ENCODE measurements at regions of chr21 and their contacts with region 1.

Region 1: DNA sequence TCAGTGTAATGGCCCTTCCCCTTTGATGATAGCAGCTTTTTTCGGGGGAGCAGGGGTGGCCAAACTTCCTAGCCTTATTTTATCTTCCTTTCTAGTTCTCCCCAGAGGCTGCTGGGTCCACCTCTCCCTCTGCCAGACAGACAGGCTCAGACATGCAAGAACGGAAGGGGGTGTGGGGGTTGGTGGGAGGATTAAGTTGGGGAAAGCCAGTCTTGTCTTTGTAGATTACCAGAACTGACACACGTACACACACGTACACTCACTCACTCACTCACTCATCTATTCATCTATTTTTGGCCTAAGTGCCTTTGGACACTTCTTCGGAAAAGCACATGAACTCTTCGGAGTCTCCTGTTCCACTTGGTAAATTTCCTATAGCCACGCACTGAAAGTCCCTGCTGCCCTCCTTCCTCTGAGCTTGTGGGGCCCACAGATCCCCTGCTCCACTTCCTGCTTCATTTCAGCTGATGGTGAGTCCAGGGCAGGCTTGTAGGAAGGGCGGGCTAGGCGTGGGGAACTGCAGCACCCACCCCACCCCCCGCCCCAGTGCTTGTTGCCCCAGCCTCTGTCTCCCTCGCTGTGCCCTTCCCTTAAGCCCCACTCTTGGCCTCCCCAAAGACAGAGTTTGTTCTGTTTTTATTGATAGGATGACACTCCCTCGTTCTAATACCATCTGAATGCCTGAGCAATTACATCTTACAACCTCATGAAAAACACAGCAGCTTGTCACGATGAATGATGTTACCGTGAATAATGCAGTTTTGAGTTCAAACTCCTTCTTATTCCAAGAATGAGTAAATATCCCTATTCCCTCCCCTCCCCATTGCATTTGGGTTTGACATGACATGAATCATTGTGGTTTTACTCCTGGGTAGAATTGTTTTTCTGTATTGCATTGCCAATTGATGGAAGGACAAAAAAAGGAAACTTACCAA is 60.7 kb upstream of the ATP5PO start:
- DNase-seq: peak; percentile 90
- ATAC-seq: peak; percentile 71
- H3K4me3 ChIP-seq: peak overlapping the region; percentile 51; the same call in 1 of the 2 replicates
- H3K27ac ChIP-seq: peak overlapping the region; percentile 99
- H3K4me1 ChIP-seq: peaks cover 27% of the 10 kb centered on the region
- H3K27me3 ChIP-seq: no peaks in the 10 kb centered on the region
- CTCF ChIP-seq: no peak
- EP300 ChIP-seq: no peak; a peak in 2 of 4 replicates
- POLR2A ChIP-seq: peak; percentile 57
- RAD21 ChIP-seq: no peak

Region 2: DNA sequence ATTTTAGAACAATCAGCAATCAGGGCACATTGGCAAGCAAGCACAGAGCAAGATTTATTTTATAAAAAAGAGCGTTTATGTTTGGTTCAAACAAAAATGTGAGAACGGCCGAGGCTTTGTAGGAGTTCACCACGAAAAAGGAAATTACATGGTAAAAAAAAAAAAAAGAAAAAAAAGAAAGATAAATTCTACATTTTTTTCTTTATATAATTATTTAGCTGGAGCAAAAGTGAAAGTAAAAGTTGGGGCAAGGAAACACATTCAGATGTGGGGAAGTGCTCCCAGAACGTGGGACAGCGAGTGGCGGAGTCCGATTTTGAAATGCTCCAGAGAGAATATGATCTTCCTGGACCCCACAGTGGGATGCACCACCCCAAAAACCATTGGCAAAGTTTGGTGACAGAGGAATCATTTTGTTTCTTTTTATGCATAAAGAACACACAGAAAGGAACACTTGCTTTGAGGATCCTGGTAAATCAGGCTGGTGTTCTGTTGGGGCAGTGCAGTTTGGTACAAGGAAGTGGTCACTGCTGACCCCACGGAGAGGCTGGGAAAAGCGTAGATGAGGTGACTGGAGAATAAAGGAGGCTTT is 44.5 kb before region 1 on chr21:
- CTCF ChIA-PET with region 1: interaction called, 3 read pairs
- POLR2A ChIA-PET with region 1: interaction called, 3 read pairs
- RAD21 ChIA-PET with region 1: interaction called, 4 read pairs
- SMC1A ChIA-PET with region 1: interaction called, 27 read pairs
- in situ Hi-C with region 1: no loop called
- intact Hi-C with region 1: no loop called
- DNase-seq: no peak
- ATAC-seq: peak; percentile 27; the same call in 2 of the 3 replicates
- H3K4me3 ChIP-seq: peak overlapping the region; percentile 57; the same call in 1 of the 2 replicates
- H3K27ac ChIP-seq: peak overlapping the region; percentile 43
- H3K4me1 ChIP-seq: no peaks in the 10 kb centered on the region
- H3K27me3 ChIP-seq: no peaks in the 10 kb centered on the region
- CTCF ChIP-seq: no peak
- EP300 ChIP-seq: no peak
- POLR2A ChIP-seq: no peak
- RAD21 ChIP-seq: no peak

Region 3: GRCh38 chr21:33988237-33989017 is 12.1 kb after region 1 on chr21:
- CTCF ChIA-PET with region 1: interaction called, 4 read pairs
- POLR2A ChIA-PET with region 1: interaction called, 5 read pairs
- RAD21 ChIA-PET with region 1: interaction called, 7 read pairs
- SMC1A ChIA-PET with region 1: interaction called, 16 read pairs
- in situ Hi-C with region 1: no loop called
- intact Hi-C with region 1: no loop called
- DNase-seq: no peak
- ATAC-seq: no peak
- H3K4me3 ChIP-seq: no peak overlapping the region
- H3K27ac ChIP-seq: no peak overlapping the region
- H3K4me1 ChIP-seq: peaks cover 21% of the 10 kb centered on the region
- H3K27me3 ChIP-seq: no peaks in the 10 kb centered on the region
- CTCF ChIP-seq: no peak
- EP300 ChIP-seq: no peak
- POLR2A ChIP-seq: no peak
- RAD21 ChIP-seq: no peak

Region 4: DNA sequence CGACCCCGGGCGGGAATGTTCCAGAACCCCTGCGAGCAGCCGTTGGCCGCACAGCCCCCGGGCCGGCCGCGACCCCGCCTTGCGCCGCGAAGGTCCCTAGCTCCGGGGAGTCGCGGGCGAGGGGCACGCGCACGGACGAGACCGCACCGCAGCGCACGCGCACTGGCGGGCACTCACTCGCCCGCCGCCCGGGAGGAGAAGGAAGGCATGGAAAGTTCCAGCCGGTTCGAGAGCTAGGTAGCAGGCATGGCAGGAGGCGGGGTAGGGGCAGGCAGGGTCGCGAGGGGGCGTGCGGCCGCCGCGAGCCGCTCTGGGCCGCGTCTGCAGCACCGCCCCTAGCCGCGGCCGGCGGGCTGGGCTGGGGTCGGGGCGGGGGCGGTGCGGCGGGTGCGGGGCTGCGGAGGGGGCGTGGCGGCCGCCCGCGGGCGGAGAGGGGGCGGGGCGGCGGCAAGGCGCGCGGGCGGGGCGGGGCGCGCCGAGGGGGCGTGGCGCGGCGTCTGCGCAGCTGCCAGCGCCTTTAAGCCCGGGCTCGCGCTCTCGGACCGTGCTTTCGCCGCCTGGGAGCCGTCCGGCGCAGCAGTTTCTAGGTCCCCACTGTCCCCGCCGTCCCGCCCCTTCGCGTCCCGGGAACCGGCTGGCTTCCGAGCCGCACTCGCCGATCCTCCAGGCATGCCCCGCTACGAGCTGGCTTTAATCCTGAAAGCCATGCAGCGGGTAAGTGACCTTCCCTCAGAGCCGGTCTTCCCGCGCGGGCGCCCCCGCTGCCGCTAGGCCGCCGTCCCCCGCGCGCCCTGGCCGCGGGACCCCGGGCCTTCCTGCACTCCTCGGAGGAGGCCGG is 96.9 kb after region 1 on chr21 and contains the starts of genes MRPS6 and SLC5A3:
- CTCF ChIA-PET with region 1: no interaction called
- POLR2A ChIA-PET with region 1: interaction called, 4 read pairs
- RAD21 ChIA-PET with region 1: interaction called, 6 read pairs
- SMC1A ChIA-PET with region 1: interaction called, 21 read pairs
- in situ Hi-C with region 1: no loop called
- intact Hi-C with region 1: loop called (anchors 2 kb)
- DNase-seq: no peak
- ATAC-seq: peak; percentile 75
- H3K4me3 ChIP-seq: peak within 1 kb of the TSS; percentile 91
- H3K27ac ChIP-seq: peak within 1 kb of the TSS; percentile 72
- H3K4me1 ChIP-seq: peaks cover 11% of the 10 kb centered on the region
- H3K27me3 ChIP-seq: no peaks in the 10 kb centered on the region
- CTCF ChIP-seq: no peak; a peak in 1 of 6 replicates
- EP300 ChIP-seq: no peak; a peak in 1 of 4 replicates
- POLR2A ChIP-seq: peak; percentile 98
- RAD21 ChIP-seq: no peak
- polyA plus RNA-seq, gene MRPS6: 55.6 to 95.2 TPM
- polyA plus RNA-seq, gene SLC5A3: 3.3 to 4.7 TPM

Region 5: GRCh38 chr21:34078915-34079314 is 102.6 kb after region 1 on chr21:
- CTCF ChIA-PET with region 1: interaction called, 3 read pairs
- POLR2A ChIA-PET with region 1: interaction called, 4 read pairs
- RAD21 ChIA-PET with region 1: interaction called, 8 read pairs
- SMC1A ChIA-PET with region 1: interaction called, 21 read pairs
- in situ Hi-C with region 1: no loop called
- intact Hi-C with region 1: loop called (anchors 2 kb)
- DNase-seq: no peak
- ATAC-seq: peak; percentile 8; the same call in 2 of the 3 replicates
- H3K4me3 ChIP-seq: 0 out of 2 replicates have a peak overlapping the region, but pooled peaks have one; percentile 16
- H3K27ac ChIP-seq: 0 out of 2 replicates have a peak overlapping the region, but pooled peaks have one; percentile 9
- H3K4me1 ChIP-seq: peaks cover 32% of the 10 kb centered on the region
- H3K27me3 ChIP-seq: no peaks in the 10 kb centered on the region
- CTCF ChIP-seq: no peak
- EP300 ChIP-seq: no peak
- POLR2A ChIP-seq: no peak
- RAD21 ChIP-seq: no peak

Region 6: DNA sequence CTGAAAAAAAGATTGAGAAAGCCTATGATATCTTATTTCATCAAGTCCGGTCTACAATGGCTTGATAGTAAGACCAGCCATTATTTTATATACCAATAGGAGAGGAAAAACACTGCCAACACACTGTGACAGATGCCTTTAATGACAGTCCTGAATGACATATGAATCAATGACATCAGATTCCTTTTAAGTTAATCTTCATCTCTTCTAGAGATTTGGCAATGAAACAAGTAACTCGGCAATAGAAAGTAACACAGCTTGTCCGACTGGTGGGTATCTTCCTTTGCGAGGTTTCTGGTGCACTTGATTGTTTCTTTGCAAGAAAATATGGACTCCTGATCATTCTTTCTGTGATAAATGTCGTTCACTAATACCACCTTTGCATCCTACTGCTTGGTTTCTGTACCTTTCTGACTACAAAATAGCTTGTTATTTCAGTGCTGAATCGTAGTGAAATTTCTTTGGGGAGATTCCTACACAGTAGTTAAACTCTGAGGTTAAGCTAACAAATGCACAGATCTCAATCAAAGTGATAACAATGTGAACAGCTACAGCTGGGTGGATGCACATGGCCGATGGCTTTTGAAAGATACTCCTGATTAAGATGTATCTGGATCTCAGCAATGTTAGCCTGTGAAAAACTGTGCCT is 201.7 kb after region 1 on chr21:
- CTCF ChIA-PET with region 1: no interaction called
- POLR2A ChIA-PET with region 1: no interaction called
- RAD21 ChIA-PET with region 1: no interaction called
- SMC1A ChIA-PET with region 1: no interaction called
- in situ Hi-C with region 1: no loop called
- intact Hi-C with region 1: no loop called
- DNase-seq: no peak
- ATAC-seq: no peak
- H3K4me3 ChIP-seq: no peak overlapping the region
- H3K27ac ChIP-seq: no peak overlapping the region
- H3K4me1 ChIP-seq: no peaks in the 10 kb centered on the region
- H3K27me3 ChIP-seq: no peaks in the 10 kb centered on the region
- CTCF ChIP-seq: no peak
- EP300 ChIP-seq: no peak
- POLR2A ChIP-seq: no peak
- RAD21 ChIP-seq: no peak